Left colon (tissue), 2 donors: ENCODE measurements at regions of chr6 and their contacts with region 1.

Region 1: GRCh38 chr6:133973109-133973971 is 20.3 kb downstream of the TBPL1 start:
- DNase-seq: no peak
- ATAC-seq: peak; percentile 52

Region 2: GRCh38 chr6:134063966-134064445 is 90.7 kb after region 1 on chr6:
- intact Hi-C with region 1: loop called in 1 of 2 experiments (anchors 5 kb)
- DNase-seq: peak; percentile 40 to 50
- ATAC-seq: peak; percentile 92